ENCODE measurements at regions of chr10 and their contacts with region 1.

Region 1: GRCh38 chr10:4120096-4120853 is 335.3 kb upstream of the KLF6 start:
- DNase-seq: no peak
- ATAC-seq: peak; percentile 82
- H3K4me3 ChIP-seq: no peak overlapping the region
- H3K27ac ChIP-seq: peak overlapping the region; percentile 77
- H3K4me1 ChIP-seq: peaks cover 19% of the 10 kb centered on the region
- H3K27me3 ChIP-seq: no peaks in the 10 kb centered on the region
- CTCF ChIP-seq: no peak

Region 2: DNA sequence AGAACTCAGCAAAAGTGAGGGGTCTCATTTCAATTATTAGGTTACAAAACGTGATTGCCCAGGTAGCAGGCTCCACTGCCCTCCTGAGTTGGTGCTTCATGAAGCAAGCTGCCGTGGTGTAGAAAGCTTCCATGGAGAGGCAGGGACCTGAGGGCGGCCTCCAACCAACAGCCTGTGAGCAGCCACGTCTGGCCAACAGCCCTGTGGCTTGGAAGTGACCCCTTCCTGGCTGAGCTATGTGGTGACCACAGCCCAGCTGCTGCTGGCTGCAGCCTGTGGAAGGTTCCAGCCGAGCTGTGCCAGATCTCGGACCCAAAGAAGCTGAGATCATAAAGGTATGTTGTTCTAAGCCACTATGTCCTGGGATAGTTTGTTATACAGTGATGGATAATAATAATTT is 212.8 kb before region 1 on chr10:
- CTCF ChIA-PET with region 1: no interaction called
- POLR2A ChIA-PET with region 1: interaction called, 11 read pairs
- in situ Hi-C with region 1: no loop called
- intact Hi-C with region 1: no loop called
- DNase-seq: no peak
- ATAC-seq: 0 out of 2 replicates have a peak, but pooled peaks have one; percentile 17
- H3K4me3 ChIP-seq: no peak overlapping the region
- H3K27ac ChIP-seq: peak overlapping the region; percentile 99
- H3K4me1 ChIP-seq: peaks cover 38% of the 10 kb centered on the region
- H3K27me3 ChIP-seq: no peaks in the 10 kb centered on the region
- CTCF ChIP-seq: no peak

Region 3: GRCh38 chr10:3961082-3961481 is 159.2 kb before region 1 on chr10:
- CTCF ChIA-PET with region 1: no interaction called
- POLR2A ChIA-PET with region 1: interaction called, 16 read pairs
- in situ Hi-C with region 1: no loop called
- intact Hi-C with region 1: no loop called
- DNase-seq: no peak
- ATAC-seq: no peak
- H3K4me3 ChIP-seq: no peak overlapping the region
- H3K27ac ChIP-seq: peak overlapping the region; percentile 84
- H3K4me1 ChIP-seq: peaks cover 50% of the 10 kb centered on the region
- H3K27me3 ChIP-seq: no peaks in the 10 kb centered on the region
- CTCF ChIP-seq: no peak

Region 4: DNA sequence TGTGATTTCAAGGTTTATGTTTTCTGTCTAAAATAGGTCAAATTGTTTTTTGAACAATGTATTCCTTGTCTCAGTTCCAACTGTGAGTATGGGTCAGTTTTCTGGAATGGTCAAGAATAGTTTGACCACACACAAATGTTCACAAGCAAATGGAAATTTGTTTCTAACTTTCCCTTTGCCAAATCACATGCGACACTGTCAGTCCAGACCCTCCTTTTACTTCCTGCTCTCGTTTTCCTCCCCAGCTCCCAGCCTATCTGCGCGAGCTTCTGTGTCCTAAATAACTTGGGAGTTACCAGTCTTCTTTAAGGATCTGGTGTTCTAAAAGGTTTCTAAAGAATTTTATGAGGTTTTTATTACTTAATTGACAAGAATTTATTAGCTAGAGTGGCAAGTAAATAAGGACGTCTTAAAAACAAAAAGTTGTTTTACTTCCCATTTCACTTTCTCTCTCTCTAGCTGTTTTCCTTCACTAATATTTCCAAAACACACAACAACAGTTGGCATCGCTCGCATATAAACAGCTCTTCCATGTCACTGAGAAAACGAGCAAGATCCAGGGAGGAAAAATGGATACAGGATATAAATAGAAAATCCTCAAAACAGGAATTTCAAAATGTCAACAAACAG is 69.1 kb before region 1 on chr10:
- CTCF ChIA-PET with region 1: interaction called, 11 read pairs
- POLR2A ChIA-PET with region 1: no interaction called
- in situ Hi-C with region 1: no loop called
- intact Hi-C with region 1: no loop called
- DNase-seq: no peak
- ATAC-seq: no peak
- H3K4me3 ChIP-seq: no peak overlapping the region
- H3K27ac ChIP-seq: peak overlapping the region; percentile 75
- H3K4me1 ChIP-seq: no peaks in the 10 kb centered on the region
- H3K27me3 ChIP-seq: no peaks in the 10 kb centered on the region
- CTCF ChIP-seq: no peak

Region 5: DNA sequence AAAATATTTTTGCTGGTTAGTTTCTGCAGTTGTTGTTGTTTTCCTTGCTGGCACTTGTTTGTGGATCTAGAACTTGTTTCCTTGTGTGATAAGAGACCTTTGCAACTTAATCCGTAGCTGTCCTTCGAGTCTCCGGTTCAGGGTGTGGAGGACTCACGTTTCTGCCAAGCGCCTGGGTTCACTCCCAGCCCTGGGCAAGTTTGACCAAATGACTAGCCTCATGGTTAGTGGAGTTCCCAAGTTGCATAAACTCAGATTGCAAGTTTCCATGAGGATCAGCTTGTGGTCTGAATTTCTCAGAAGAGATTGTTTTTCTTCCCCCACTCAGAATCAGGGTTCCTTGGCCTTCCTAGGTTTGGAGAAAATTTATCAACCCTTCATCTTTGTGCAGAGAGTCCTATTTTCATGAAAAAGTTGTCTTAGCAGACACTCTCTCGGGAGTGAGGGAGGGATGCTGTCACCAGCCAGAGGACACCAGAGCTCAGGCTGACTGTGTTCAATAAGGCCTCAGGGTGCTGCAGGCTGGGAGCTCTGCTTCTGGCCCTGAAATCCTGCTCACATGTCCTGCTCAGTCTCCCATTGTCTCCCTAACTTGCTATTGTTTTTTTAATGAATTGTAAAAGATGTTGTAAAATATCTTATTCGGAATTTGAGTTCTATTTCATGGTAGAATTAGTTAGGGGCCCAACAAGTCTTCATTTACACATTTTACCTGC is 42.5 kb after region 1 on chr10:
- CTCF ChIA-PET with region 1: no interaction called
- POLR2A ChIA-PET with region 1: no interaction called
- in situ Hi-C with region 1: no loop called
- intact Hi-C with region 1: no loop called
- DNase-seq: no peak
- ATAC-seq: no peak
- H3K4me3 ChIP-seq: no peak overlapping the region
- H3K27ac ChIP-seq: 0 out of 2 replicates have a peak overlapping the region, but pooled peaks have one; percentile 12
- H3K4me1 ChIP-seq: no peaks in the 10 kb centered on the region
- H3K27me3 ChIP-seq: no peaks in the 10 kb centered on the region
- CTCF ChIP-seq: no peak

Region 6: DNA sequence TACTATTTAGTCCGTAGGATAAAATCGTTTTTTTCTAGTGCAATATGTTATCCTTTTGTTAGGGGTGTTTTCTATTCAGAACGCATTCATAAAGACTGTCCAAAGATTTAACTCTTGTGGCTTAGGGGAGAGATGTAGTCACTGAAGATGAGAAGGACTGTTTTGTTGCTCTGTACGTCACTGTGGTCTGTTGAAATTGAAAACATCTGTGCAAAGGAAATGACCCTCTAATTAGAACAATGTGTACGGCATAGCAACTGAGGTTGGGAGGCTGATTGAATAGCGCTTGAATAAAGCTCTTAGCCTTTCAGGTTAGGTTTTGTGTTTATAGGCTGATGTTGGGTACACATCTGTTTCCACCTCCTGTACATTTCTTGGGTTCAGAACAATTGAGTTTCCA is 252.3 kb after region 1 on chr10:
- CTCF ChIA-PET with region 1: no interaction called
- POLR2A ChIA-PET with region 1: no interaction called
- in situ Hi-C with region 1: no loop called
- intact Hi-C with region 1: no loop called
- DNase-seq: no peak
- ATAC-seq: no peak
- H3K4me3 ChIP-seq: no peak overlapping the region
- H3K27ac ChIP-seq: no peak overlapping the region
- H3K4me1 ChIP-seq: no peaks in the 10 kb centered on the region
- H3K27me3 ChIP-seq: no peaks in the 10 kb centered on the region
- CTCF ChIP-seq: no peak